ENCODE measurements at regions of chr7 and their contacts with region 1.

Region 1: DNA sequence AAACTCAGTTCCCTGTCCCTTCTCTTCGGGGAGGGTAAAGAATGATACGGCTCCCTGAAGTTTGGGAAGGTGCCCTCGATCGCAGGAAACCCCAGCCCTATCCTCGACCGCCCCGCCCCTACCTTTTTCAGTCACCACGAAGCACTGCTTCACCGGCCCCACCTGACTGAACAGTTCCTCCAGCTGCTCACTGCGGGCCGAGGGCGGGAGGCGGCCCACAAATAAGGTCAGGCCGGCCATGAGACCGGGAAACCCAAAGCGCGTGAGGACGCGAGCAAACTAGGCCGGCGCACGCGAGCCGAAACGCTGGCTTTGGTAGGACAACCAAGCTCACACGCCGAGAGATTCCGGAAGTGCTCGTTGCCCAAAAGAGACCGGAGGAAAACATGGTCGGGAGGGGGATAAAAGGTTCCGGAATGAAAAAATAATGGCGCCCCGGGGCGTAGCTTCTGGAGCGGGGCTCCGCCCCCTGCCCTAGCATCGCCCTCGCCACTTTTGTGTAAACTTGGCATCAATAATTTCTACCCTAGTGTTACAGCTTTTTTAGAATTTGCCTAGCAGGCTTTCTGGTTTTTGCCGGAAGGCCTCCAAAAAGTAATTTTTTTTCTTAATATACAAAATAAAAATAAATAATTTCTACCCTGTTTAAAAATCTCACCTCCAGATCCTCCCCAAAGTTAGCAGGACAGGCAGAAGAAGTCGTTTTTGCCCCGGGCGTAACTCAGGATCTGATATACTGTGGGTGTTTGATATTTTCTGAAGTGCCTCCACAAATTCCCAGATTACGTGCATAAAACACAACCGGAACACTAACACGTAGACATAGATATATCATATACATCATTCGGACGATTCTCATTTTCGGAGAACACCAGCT is at the start of gene RBM28:
- DNase-seq: peak; percentile 74 to 93 (median 83)
- ATAC-seq: peak; percentile 94
- H3K4me3 ChIP-seq: peak within 1 kb of the TSS; percentile 78 to 87
- H3K4me3 Mint-ChIP-seq: peak within 1 kb of the TSS; percentile 95
- H3K27ac ChIP-seq: peak within 1 kb of the TSS; percentile 60 to 67
- H3K27ac Mint-ChIP-seq: peak within 1 kb of the TSS; percentile 94
- H3K4me1 ChIP-seq: peaks cover 26% of the 10 kb centered on the region
- H3K4me1 Mint-ChIP-seq: peaks cover 35% of the 10 kb centered on the region
- H3K27me3 ChIP-seq: no peaks in the 10 kb centered on the region
- H3K27me3 Mint-ChIP-seq: peaks cover 3% of the 10 kb centered on the region
- CTCF ChIP-seq: no peak
- total RNA-seq, gene RBM28: 13.1 to 14.7 TPM

Region 2: DNA sequence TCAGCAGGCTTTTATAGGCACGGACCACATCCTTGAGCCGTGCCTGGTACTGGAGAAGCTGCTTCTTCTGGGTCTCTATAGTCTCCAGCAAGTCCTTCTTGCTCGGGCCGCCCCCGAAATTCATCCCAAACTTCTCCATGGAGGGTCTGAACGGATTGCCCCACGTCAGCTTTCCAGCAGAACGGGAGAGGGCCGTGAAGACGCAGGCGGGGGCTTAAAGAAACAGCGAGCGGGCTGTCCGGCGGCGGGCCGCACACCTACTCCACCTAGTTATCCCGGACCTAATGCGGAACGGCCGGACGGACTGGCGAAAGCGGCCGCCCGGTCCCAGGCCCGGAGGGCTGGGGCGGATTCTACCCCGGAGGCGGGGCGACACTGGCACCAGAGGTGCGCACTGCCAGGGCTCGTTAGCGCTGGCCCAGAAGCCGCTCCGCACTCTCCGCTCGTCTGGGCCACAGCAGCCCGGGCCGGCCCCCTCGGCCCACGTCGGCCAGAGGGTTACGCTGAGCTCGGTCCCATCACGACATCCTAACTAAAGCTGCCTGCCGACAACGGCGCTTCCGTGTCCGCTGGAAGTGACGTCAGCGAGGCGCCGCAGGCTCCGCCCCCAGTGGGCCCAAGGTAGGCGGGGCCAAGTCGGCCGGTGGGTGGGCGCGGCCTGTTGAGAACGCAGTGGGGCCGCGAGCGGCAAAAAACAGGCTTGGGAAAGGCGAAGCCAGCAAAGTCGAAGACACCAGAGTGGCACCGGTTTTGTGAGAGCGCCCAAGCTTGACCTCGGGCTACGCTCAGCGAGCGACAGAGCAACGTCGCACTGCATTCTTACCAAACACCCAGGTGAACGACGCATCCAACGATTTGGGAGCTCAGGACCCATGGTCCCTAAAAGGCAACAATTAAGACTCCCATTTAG is 758.5 kb before region 1 on chr7 and contains the start of gene GCC1:
- CTCF ChIA-PET with region 1: no interaction called
- POLR2A ChIA-PET with region 1: no interaction called
- intact Hi-C with region 1: loop called (anchors 2 to 5 kb)
- DNase-seq: peak; percentile 89 to 98 (median 94)
- ATAC-seq: peak; percentile 83
- H3K4me3 ChIP-seq: peak within 1 kb of the TSS; percentile 91 to 99
- H3K4me3 Mint-ChIP-seq: peak within 1 kb of the TSS; percentile 92
- H3K27ac ChIP-seq: peak within 1 kb of the TSS; percentile 94 to 95
- H3K27ac Mint-ChIP-seq: peak within 1 kb of the TSS; percentile 93
- H3K4me1 ChIP-seq: peaks cover 71% of the 10 kb centered on the region
- H3K4me1 Mint-ChIP-seq: peaks cover 79% of the 10 kb centered on the region
- H3K27me3 ChIP-seq: no peaks in the 10 kb centered on the region
- H3K27me3 Mint-ChIP-seq: no peaks in the 10 kb centered on the region
- CTCF ChIP-seq: no peak
- total RNA-seq, gene GCC1: 33.8 to 36.6 TPM

Region 3: GRCh38 chr7:127733986-127734385 is 609.8 kb before region 1 on chr7:
- CTCF ChIA-PET with region 1: no interaction called
- POLR2A ChIA-PET with region 1: no interaction called
- intact Hi-C with region 1: no loop called
- DNase-seq: no peak
- ATAC-seq: no peak
- H3K4me3 ChIP-seq: no peak overlapping the region
- H3K4me3 Mint-ChIP-seq: no peak overlapping the region
- H3K27ac ChIP-seq: no peak overlapping the region
- H3K27ac Mint-ChIP-seq: no peak overlapping the region
- H3K4me1 ChIP-seq: no peaks in the 10 kb centered on the region
- H3K4me1 Mint-ChIP-seq: peaks cover 3% of the 10 kb centered on the region
- H3K27me3 ChIP-seq: no peaks in the 10 kb centered on the region
- H3K27me3 Mint-ChIP-seq: no peaks in the 10 kb centered on the region
- CTCF ChIP-seq: no peak

Region 4: DNA sequence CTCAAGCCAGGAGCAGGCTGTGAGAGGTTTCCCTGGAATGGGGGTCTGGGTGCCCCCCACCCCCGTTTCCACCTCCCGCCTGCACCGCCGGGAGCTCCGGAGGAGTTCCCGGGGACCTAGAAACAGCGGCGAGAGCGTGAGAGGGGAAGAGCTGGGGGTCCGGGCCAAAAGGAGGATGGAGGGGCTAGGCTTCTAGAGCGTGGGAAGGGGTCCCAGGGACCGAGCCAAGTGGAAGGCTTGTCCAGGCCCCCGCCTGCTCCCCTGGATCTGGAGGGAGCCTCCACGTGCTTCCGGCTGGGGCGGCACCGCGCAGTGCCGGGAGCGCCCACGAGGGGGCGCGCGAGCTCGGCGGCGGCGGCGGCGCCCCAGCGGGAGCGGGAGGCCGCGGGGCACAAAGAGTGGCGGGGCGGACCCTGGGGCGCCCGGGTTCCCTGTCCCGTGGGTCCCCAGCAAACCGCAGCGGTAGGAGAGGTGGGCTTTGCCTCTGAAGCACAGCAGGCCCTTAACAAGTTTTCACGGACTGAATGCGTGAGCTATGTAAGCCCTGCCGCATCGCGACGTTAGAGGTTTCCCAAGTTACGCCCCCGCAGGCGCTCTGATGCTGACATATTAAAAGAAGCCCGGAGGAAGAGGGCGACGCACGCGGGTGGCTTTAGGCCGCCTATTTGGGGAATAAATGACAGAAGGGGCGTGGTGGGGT is 208.1 kb before region 1 on chr7:
- CTCF ChIA-PET with region 1: no interaction called
- POLR2A ChIA-PET with region 1: no interaction called
- intact Hi-C with region 1: loop called in 1 of 2 experiments (anchors 1 kb)
- DNase-seq: peak; percentile 33 to 81 (median 46)
- ATAC-seq: peak; percentile 95
- H3K4me3 ChIP-seq: peak overlapping the region; percentile 62 to 66
- H3K4me3 Mint-ChIP-seq: peak overlapping the region; percentile 82
- H3K27ac ChIP-seq: no peak overlapping the region
- H3K27ac Mint-ChIP-seq: no peak overlapping the region
- H3K4me1 ChIP-seq: peaks cover 14% of the 10 kb centered on the region
- H3K4me1 Mint-ChIP-seq: peaks cover 17% of the 10 kb centered on the region
- H3K27me3 ChIP-seq: peaks cover 0 to 21% of the 10 kb centered on the region in 2 experiments
- H3K27me3 Mint-ChIP-seq: peaks cover 22% of the 10 kb centered on the region
- CTCF ChIP-seq: peak; percentile 91

Region 5: GRCh38 chr7:128381161-128381821 is 37.5 kb after region 1 on chr7:
- CTCF ChIA-PET with region 1: interaction called, 74 read pairs
- POLR2A ChIA-PET with region 1: no interaction called
- intact Hi-C with region 1: no loop called
- DNase-seq: peak in 3 of 9 experiments; percentile 42 to 47 (median 44)
- ATAC-seq: no peak
- H3K4me3 ChIP-seq: no peak overlapping the region
- H3K4me3 Mint-ChIP-seq: no peak overlapping the region
- H3K27ac ChIP-seq: no peak overlapping the region
- H3K27ac Mint-ChIP-seq: no peak overlapping the region
- H3K4me1 ChIP-seq: no peaks in the 10 kb centered on the region
- H3K4me1 Mint-ChIP-seq: no peaks in the 10 kb centered on the region
- H3K27me3 ChIP-seq: no peaks in the 10 kb centered on the region
- H3K27me3 Mint-ChIP-seq: no peaks in the 10 kb centered on the region
- CTCF ChIP-seq: peak; percentile 50

Region 6: GRCh38 chr7:128425850-128426249 is 82.1 kb after region 1 on chr7:
- CTCF ChIA-PET with region 1: interaction called, 23 read pairs
- POLR2A ChIA-PET with region 1: no interaction called
- intact Hi-C with region 1: loop called in 1 of 2 experiments (anchors 1 kb)
- DNase-seq: peak; percentile 56 to 85 (median 81)
- ATAC-seq: peak; percentile 80
- H3K4me3 ChIP-seq: no peak overlapping the region
- H3K4me3 Mint-ChIP-seq: no peak overlapping the region
- H3K27ac ChIP-seq: no peak overlapping the region
- H3K27ac Mint-ChIP-seq: no peak overlapping the region
- H3K4me1 ChIP-seq: no peaks in the 10 kb centered on the region
- H3K4me1 Mint-ChIP-seq: peaks cover 8% of the 10 kb centered on the region
- H3K27me3 ChIP-seq: no peaks in the 10 kb centered on the region
- H3K27me3 Mint-ChIP-seq: peaks cover 10% of the 10 kb centered on the region
- CTCF ChIP-seq: peak; percentile 96

Region 7: DNA sequence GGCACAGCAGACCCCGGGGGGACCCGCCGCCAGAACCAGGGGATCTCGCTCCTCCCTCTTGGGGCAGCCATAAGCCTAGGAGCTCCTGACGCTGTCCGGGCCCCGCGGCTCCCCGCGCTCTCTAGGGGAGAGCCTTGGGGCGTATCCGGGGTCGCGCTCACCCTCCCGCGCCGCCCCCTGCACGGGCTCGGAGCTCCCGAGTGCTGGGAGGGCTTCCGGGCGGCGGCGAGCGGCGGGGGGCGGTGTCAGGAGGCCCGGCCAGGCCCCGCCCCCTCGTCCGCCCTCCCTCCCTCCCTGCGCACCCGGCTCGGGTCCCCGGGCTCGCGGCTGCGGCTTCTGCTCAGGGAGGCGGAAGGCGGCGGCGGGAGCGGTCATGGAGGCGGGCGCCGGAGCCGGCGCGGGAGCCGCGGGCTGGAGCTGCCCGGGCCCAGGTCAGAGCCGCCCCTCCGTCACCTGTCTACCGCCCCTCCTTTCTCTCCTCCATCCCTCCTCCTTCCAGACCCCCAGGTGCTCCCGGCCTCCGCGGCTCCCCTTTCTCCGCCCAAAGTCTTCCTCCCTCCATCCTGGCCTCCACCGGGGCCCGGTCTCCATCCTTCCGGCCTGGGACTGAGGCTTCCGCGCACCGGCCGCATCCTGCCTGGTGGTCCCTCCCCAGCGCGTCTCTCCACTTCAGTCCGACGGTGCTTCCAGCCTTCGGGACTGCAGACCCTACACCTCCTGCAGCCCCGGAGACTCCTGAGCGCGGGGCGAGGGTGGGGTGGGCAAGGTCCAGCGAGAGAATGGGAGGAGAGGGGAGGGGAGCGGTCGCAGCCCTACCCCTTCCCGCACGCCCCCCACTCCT is 447.5 kb after region 1 on chr7:
- CTCF ChIA-PET with region 1: no interaction called
- POLR2A ChIA-PET with region 1: no interaction called
- intact Hi-C with region 1: loop called in 1 of 2 experiments (anchors 5 kb)
- DNase-seq: peak; percentile 40 to 89 (median 79)
- ATAC-seq: peak; percentile 95
- H3K4me3 ChIP-seq: peak overlapping the region; percentile 71 to 89
- H3K4me3 Mint-ChIP-seq: peak overlapping the region; percentile 84
- H3K27ac ChIP-seq: peak overlapping the region in 1 of 2 experiments; percentile 19
- H3K27ac Mint-ChIP-seq: no peak overlapping the region
- H3K4me1 ChIP-seq: peaks cover 9% of the 10 kb centered on the region
- H3K4me1 Mint-ChIP-seq: peaks cover 20% of the 10 kb centered on the region
- H3K27me3 ChIP-seq: no peaks in the 10 kb centered on the region
- H3K27me3 Mint-ChIP-seq: no peaks in the 10 kb centered on the region
- CTCF ChIP-seq: no peak

Region 8: GRCh38 chr7:129224251-129225205 is 880.7 kb after region 1 on chr7 and contains the start of gene AHCYL2:
- CTCF ChIA-PET with region 1: no interaction called
- POLR2A ChIA-PET with region 1: no interaction called
- intact Hi-C with region 1: loop called in 1 of 2 experiments (anchors 5 kb)
- DNase-seq: peak; percentile 96 to 99 (median 97)
- ATAC-seq: peak; percentile 87
- H3K4me3 ChIP-seq: peak within 1 kb of the TSS; percentile 71 to 96
- H3K4me3 Mint-ChIP-seq: peak within 1 kb of the TSS; percentile 95
- H3K27ac ChIP-seq: peak within 1 kb of the TSS; percentile 76 to 91
- H3K27ac Mint-ChIP-seq: peak within 1 kb of the TSS; percentile 93
- H3K4me1 ChIP-seq: peaks cover 26% of the 10 kb centered on the region
- H3K4me1 Mint-ChIP-seq: peaks cover 44% of the 10 kb centered on the region
- H3K27me3 ChIP-seq: no peaks in the 10 kb centered on the region
- H3K27me3 Mint-ChIP-seq: no peaks in the 10 kb centered on the region
- CTCF ChIP-seq: no peak
- total RNA-seq, gene AHCYL2: 3.1 to 5.8 TPM

Measured in CD8-positive, alpha-beta T cell (primary cell).